GM10248 (cell line): ENCODE measurements at regions of chr12 and their contacts with region 1.

Region 1: GRCh38 chr12:96215919-96216273 is 21.7 kb downstream of the ELK3 start:
- DNase-seq: no peak
- CTCF ChIP-seq: no peak

Region 2: DNA sequence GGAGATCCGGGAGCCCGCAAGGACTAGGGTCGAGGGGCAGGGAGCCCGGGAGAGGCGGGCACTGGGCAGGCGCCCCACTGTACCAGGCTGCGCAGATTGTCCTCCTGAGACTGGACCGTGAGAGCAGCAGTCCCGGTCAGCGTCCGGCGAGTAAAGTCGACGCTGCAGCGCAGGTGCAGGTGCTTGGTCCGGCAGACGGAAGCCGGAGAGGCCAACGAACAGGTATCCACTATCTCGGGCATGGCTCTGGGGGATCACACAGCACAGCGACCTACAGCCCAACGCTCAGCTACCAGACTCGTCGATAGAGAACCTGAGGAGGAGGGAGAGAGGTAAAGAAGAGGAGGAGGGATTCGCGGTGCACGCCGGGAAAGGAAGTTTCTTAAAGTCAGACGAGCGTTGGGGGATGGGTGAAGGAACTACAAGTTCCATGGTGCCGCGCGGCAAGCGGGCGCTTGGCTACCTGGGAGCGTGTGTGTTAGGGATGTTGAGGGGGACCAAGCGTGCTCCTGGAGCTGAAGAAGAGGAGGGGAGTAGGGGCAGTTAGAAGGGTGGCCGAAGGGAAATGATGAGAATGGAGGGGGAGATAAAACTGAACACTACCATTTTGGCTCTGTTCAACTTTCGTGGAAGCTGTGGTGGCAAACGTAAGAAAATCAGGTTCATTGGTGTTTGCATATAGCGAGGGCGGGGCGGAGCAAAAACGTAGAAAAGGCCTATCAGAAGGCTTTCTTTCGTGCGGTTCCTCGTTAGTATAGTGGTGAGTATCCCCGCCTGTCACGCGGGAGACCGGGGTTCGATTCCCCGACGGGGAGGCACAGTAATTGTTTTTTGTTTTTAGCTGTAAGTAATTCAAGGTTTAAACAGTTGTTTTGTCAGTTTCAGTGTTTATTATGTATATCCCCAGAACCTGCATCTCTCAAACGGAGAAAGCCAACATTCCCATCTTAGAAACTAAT is 180.3 kb before region 1 on chr12 and contains the start of gene LTA4H:
- CTCF ChIA-PET with region 1: interaction called, 10 read pairs
- POLR2A ChIA-PET with region 1: no interaction called
- DNase-seq: peak; percentile 95
- CTCF ChIP-seq: no peak

Region 3: GRCh38 chr12:96061864-96062453 is 153.9 kb before region 1 on chr12:
- CTCF ChIA-PET with region 1: interaction called, 123 read pairs
- POLR2A ChIA-PET with region 1: no interaction called
- DNase-seq: peak; percentile 74
- CTCF ChIP-seq: peak; percentile 73

Region 4: DNA sequence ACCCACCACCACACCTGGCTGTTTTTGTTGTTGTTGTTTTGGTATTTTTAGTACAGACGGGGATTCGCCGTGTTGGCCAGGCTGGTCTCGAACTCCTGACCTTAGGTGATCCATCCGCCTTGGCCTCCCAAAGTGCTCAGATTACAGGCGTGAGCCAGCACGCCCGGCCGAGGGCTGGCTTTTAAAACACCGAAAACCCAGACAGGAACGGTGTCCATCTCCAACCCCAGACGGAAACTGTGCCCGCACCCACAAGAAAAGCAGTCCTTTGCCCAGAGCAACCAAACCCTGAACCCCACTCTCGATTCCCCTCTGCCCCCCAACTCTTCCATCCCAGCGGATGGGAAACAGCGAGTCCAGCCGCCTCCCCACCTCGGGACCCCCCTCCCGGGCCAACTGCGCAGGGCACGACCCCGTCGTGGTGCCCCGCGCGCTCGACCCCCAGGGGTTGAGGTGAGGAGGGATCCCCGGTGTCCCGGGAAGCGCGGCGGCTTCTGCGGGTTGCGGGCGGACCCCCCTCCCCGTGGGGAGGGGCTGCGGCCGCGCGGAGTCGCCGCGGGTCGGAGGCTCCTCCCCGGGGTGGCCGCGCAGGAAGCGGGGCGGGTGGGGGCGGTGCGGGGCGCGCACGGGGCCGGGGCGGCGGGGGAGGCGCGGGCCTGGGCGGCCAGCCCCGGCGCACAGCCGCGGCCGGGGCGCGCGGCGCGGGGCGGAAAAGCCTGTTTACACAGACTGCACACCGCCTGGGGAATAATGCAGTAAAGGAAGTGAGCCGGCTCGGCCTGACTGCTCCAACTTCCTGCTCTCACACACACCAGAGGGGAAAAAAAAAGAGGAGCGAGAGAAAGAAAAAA is 21.9 kb before region 1 on chr12 and contains the start of gene ELK3:
- CTCF ChIA-PET with region 1: interaction called, 14 read pairs
- POLR2A ChIA-PET with region 1: no interaction called
- DNase-seq: peak; percentile 69
- CTCF ChIP-seq: no peak

Region 5: GRCh38 chr12:96198965-96199364 is 16.9 kb before region 1 on chr12:
- CTCF ChIA-PET with region 1: interaction called, 20 read pairs
- POLR2A ChIA-PET with region 1: no interaction called
- DNase-seq: no peak
- CTCF ChIP-seq: no peak

Region 6: GRCh38 chr12:96314723-96315122 is 98.8 kb after region 1 on chr12:
- CTCF ChIA-PET with region 1: no interaction called
- POLR2A ChIA-PET with region 1: no interaction called
- DNase-seq: no peak
- CTCF ChIP-seq: no peak